HCT116 (cell line): ENCODE measurements at regions of chr2 and their contacts with region 1.

Region 1: GRCh38 chr2:1769703-1770422 is 25.5 kb upstream of the PXDN start:
- DNase-seq: peak; percentile 71
- ATAC-seq: peak; percentile 99
- H3K4me3 ChIP-seq: no peak overlapping the region
- H3K27ac ChIP-seq: no peak overlapping the region
- H3K4me1 ChIP-seq: no peaks in the 10 kb centered on the region
- H3K27me3 ChIP-seq: 0 out of 2 replicates have a peak, but pooled peaks cover 6% of the 10 kb centered on the region
- CTCF ChIP-seq: peak; percentile 87 to 92 (median 89)
- POLR2A ChIP-seq: no peak
- RAD21 ChIP-seq: peak; percentile 90

Region 2: DNA sequence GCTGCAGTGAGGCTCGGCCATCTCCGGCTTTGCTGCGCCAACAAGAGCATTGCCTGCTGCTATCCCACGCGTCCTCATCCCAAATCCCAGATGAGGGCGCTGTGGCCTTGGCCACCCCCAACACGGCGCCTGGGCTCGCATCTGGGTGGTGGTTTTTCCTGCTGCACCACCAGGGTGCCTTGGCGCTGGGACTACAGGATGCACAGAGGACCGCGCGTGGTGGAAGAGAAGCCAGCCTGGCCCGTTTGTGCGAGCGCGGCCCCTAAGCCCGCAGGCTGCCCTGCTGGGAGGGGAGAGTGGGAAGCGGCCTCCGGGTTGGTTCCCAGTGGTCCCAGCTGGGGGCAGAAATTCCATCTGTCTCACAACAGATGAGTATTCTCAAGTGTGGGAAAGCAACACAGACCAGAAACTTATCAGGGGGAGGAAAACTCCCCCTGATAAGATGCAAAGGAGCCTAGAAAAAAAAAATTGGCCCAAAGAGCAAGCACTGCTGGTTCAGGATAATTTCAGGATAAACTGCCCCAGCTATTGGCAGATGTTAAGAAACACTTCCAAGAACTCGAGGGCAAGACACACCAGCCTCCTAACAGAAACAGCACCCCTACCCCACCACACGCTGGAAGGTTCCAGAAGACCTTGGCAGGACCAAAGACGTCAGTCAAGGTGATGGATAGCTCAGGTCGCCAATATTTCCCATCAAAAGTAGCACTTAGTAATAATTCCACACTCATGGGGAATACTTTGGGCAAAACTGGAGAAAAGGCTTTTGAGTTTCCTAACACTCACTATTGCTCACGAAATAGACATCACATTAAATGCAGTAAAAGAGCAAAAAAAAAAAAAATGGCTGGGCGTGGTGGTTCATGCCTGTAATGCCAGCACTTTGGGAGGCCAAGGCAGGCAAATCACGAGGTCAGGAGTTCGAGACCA is 177.6 kb before region 1 on chr2:
- CTCF ChIA-PET with region 1: interaction called, 21 read pairs
- POLR2A ChIA-PET with region 1: no interaction called
- RAD21 ChIA-PET with region 1: no interaction called
- intact Hi-C with region 1: loop called (anchors 1 kb)
- DNase-seq: peak; percentile 41
- ATAC-seq: peak; percentile 68
- H3K4me3 ChIP-seq: no peak overlapping the region
- H3K27ac ChIP-seq: no peak overlapping the region
- H3K4me1 ChIP-seq: peaks cover 11 to 19% of the 10 kb centered on the region in 2 experiments
- H3K27me3 ChIP-seq: peaks cover 39% of the 10 kb centered on the region
- CTCF ChIP-seq: peak; percentile 54 to 94 (median 60)
- POLR2A ChIP-seq: no peak
- RAD21 ChIP-seq: peak; percentile 84

Region 3: DNA sequence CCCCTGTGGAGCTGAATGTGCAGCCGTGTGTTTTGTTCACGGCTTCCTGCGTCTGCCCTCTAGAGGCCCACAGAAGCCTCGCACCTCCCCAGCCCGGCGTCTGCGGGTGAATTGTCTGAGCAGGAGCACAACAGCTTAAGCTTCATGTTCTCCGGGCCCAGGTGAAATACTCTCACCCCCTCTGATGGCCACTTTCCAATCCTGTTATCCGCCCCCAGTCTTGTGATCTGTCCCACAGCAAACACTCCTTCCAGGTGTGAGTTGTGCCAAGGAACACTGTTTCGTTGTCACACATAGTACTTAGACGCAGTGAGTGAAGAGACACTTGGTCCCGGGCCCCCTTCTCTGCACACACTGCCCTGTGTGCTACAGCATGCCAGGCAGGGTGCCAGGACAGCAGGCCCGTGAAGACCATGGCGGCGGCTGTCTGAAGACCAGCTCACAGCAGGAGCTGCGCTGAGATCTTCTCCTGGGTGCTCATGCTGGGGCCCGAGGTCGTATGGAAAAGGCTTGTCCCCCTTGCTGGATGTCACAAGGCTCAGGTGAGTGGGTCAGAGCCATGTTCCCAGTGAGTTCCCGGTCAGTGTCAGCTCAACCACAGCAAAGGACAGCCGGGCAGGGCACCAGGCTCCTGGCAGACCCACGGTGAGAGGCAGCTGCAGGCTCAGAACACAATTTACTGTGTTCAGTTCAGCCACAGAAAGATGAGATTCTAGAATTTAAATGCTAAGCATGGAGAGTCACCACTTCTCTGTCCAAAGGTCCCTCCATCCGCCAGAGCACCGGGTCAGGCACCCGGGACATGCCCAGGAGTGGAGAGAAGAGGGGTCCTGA is 18.7 kb before region 1 on chr2:
- CTCF ChIA-PET with region 1: interaction called, 15 read pairs
- POLR2A ChIA-PET with region 1: no interaction called
- RAD21 ChIA-PET with region 1: no interaction called
- intact Hi-C with region 1: loop called (anchors 2 kb)
- DNase-seq: peak; percentile 42
- ATAC-seq: peak; percentile 94
- H3K4me3 ChIP-seq: no peak overlapping the region
- H3K27ac ChIP-seq: no peak overlapping the region
- H3K4me1 ChIP-seq: no peaks in the 10 kb centered on the region; a peak in 1 of 4 replicates
- H3K27me3 ChIP-seq: 0 out of 2 replicates have a peak, but pooled peaks cover 5% of the 10 kb centered on the region
- CTCF ChIP-seq: peak; percentile 42 to 87 (median 77)
- POLR2A ChIP-seq: no peak
- RAD21 ChIP-seq: peak; percentile 60

Region 4: GRCh38 chr2:1817256-1818051 is 47.6 kb after region 1 on chr2:
- CTCF ChIA-PET with region 1: interaction called, 5 read pairs
- POLR2A ChIA-PET with region 1: no interaction called
- RAD21 ChIA-PET with region 1: no interaction called
- intact Hi-C with region 1: loop called (anchors 2 kb)
- DNase-seq: peak; percentile 8
- ATAC-seq: peak; percentile 99
- H3K4me3 ChIP-seq: no peak overlapping the region
- H3K27ac ChIP-seq: no peak overlapping the region
- H3K4me1 ChIP-seq: peaks cover 4% of the 10 kb centered on the region in 2 experiments
- H3K27me3 ChIP-seq: no peaks in the 10 kb centered on the region
- CTCF ChIP-seq: peak; percentile 47 to 97 (median 95)
- POLR2A ChIP-seq: no peak
- RAD21 ChIP-seq: peak; percentile 76